SK-N-SH (cell line): ENCODE measurements at regions of chr7 and their contacts with region 1.

Region 1: DNA sequence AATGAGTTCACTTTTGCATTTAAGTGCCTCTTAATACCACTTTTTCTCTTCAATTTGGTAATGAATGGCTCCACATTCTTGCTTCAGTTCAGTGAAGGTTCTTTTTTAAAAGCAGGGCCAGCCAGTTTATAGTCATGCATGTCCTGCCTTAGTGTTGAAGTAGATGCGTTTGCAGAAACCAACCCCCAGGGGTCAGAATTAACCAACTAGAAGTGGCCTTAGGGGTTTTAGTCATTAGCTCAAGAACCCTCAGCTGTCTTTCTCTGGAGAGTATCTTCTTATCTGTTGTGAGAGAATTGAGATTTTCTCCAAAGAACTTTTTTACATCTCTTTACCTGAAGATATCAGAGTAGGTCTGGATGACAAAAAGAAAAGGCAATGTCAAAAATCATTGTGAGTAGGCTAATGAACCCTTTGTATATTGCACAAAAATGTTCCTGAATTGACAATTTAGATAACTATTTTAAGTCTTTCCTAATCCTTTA is 82.2 kb downstream of the PIK3CG start:
- DNase-seq: peak; percentile 72
- H3K4me3 ChIP-seq: no peak overlapping the region
- H3K27ac ChIP-seq: no peak overlapping the region
- H3K4me1 ChIP-seq: peaks cover 0 to under 1% of the 10 kb centered on the region in 2 experiments; a peak in 1 of 4 replicates
- H3K27me3 ChIP-seq: no peaks in the 10 kb centered on the region
- CTCF ChIP-seq: peak; percentile 98
- EP300 ChIP-seq: no peak
- RAD21 ChIP-seq: peak; percentile 96

Region 2: GRCh38 chr7:106205621-106206222 is 741.6 kb before region 1 on chr7:
- CTCF ChIA-PET with region 1: no interaction called
- POLR2A ChIA-PET with region 1: no interaction called
- DNase-seq: no peak
- H3K4me3 ChIP-seq: no peak overlapping the region
- H3K27ac ChIP-seq: no peak overlapping the region
- H3K4me1 ChIP-seq: peaks cover 0 to 6% of the 10 kb centered on the region in 2 experiments; a peak in 2 of 4 replicates
- H3K27me3 ChIP-seq: no peaks in the 10 kb centered on the region
- CTCF ChIP-seq: no peak
- EP300 ChIP-seq: no peak
- RAD21 ChIP-seq: no peak

Region 3: DNA sequence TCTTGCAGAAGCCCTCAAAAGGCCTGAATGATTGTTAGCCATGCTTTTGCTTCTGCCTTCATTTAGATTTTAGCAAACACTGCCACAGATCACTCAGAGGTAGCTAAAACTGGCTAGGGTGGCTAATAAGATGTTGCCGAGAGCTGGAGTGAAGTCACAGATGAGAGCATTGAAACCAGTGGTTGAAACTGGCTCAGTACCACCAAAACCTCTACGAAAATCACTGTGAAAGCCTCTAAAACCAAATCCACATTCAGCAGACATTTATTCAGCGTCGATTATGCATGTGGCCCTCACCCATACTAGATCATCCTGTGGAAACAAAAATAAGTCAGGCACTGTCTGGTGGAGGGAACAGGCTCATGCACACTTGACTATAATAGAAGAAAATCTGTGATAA is 31.4 kb before region 1 on chr7:
- CTCF ChIA-PET with region 1: no interaction called
- POLR2A ChIA-PET with region 1: no interaction called
- DNase-seq: no peak
- H3K4me3 ChIP-seq: no peak overlapping the region
- H3K27ac ChIP-seq: no peak overlapping the region
- H3K4me1 ChIP-seq: no peaks in the 10 kb centered on the region
- H3K27me3 ChIP-seq: no peaks in the 10 kb centered on the region; the same call in 1 of the 2 replicates
- CTCF ChIP-seq: no peak
- EP300 ChIP-seq: no peak
- RAD21 ChIP-seq: no peak

Region 4: DNA sequence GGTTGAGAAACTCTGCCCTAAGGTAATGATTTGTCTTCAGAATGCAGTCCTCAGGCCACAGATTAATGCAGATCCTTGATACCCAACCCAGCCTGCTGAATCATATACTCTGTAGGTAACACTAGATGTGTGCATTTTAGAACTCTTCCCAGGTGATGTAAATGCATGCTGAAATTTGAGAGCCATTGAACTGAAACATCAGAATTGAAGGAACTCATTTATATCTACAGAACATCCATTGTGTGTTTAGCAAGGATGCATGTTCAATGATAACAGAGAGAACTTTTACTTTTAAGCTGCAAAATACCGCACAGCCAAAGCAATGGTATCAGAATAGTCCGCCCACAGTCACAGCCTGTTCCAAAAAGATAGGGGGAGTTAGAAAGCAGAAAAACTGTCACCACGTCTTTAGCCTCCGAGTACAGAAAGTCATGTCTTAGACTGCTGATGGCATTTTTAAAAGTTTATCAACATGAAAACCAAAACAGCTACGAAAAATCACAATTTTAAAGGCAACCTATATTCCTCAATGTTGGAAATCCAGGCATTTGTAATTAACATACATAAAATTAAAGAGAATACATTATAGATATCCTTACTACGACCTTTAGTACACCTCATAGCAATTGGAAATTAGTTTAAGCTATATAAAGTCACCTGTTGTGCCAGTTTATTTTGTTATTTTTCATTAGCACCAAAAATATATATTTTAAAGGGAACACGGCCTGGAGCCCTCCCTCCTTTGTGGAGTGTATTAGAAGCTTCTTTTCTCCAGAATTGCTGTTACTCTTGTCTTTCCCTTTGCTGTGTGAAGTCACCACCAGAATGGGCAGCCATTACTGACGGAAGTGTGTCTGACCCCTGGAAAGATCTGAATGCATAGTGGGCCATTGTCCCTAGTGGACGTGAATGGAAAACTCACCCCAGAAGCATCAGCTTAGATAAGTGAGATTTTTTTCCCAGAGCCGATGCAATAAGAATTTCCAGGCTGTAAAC is 31.4 kb after region 1 on chr7:
- CTCF ChIA-PET with region 1: interaction called, 20 read pairs
- POLR2A ChIA-PET with region 1: no interaction called
- DNase-seq: peak; percentile 51
- H3K4me3 ChIP-seq: no peak overlapping the region
- H3K27ac ChIP-seq: no peak overlapping the region
- H3K4me1 ChIP-seq: no peaks in the 10 kb centered on the region
- H3K27me3 ChIP-seq: no peaks in the 10 kb centered on the region
- CTCF ChIP-seq: peak; percentile 25; the same call in 1 of the 2 replicates
- EP300 ChIP-seq: no peak
- RAD21 ChIP-seq: 0 out of 2 replicates have a peak, but pooled peaks have one; percentile 4

Region 5: GRCh38 chr7:107044347-107045194 is 97.3 kb after region 1 on chr7 and contains the start of gene PRKAR2B:
- CTCF ChIA-PET with region 1: interaction called, 12 read pairs
- POLR2A ChIA-PET with region 1: no interaction called
- DNase-seq: peak; percentile 100
- H3K4me3 ChIP-seq: peak within 1 kb of the TSS; percentile 98 to 100
- H3K27ac ChIP-seq: peak within 1 kb of the TSS; percentile 51 to 93
- H3K4me1 ChIP-seq: peaks cover 12 to 28% of the 10 kb centered on the region in 2 experiments; a peak in 3 of 4 replicates
- H3K27me3 ChIP-seq: no peaks in the 10 kb centered on the region
- CTCF ChIP-seq: no peak
- EP300 ChIP-seq: 0 out of 4 replicates have a peak, but pooled peaks of 1 of the 2 experiments have one; percentile 28
- RAD21 ChIP-seq: peak; percentile 38
- polyA plus RNA-seq, gene PRKAR2B: 17.3 and 19.3 TPM in 2 replicates

Region 6: GRCh38 chr7:107157091-107157490 is 209.8 kb after region 1 on chr7:
- CTCF ChIA-PET with region 1: interaction called, 118 read pairs
- POLR2A ChIA-PET with region 1: no interaction called
- DNase-seq: no peak
- H3K4me3 ChIP-seq: no peak overlapping the region
- H3K27ac ChIP-seq: no peak overlapping the region
- H3K4me1 ChIP-seq: peaks cover 0 to under 1% of the 10 kb centered on the region in 2 experiments; a peak in 1 of 4 replicates
- H3K27me3 ChIP-seq: no peaks in the 10 kb centered on the region
- CTCF ChIP-seq: no peak
- EP300 ChIP-seq: no peak
- RAD21 ChIP-seq: no peak

Region 7: GRCh38 chr7:107168233-107169119 is 221.2 kb after region 1 on chr7 and contains the start of gene HBP1:
- CTCF ChIA-PET with region 1: interaction called, 12 read pairs
- POLR2A ChIA-PET with region 1: no interaction called
- DNase-seq: peak; percentile 95
- H3K4me3 ChIP-seq: peak within 1 kb of the TSS; percentile 87 to 89
- H3K27ac ChIP-seq: peak within 1 kb of the TSS; percentile 97 to 98
- H3K4me1 ChIP-seq: peaks cover 0 to 13% of the 10 kb centered on the region in 2 experiments; a peak in 2 of 4 replicates
- H3K27me3 ChIP-seq: no peaks in the 10 kb centered on the region
- CTCF ChIP-seq: no peak
- EP300 ChIP-seq: no peak
- RAD21 ChIP-seq: no peak
- polyA plus RNA-seq, gene HBP1: 27.2 and 36.8 TPM in 2 replicates